A673 (cell line): ENCODE measurements at regions of chrX and their contacts with region 1.

Region 1: GRCh38 chrX:56729152-56729850 is at the start of gene NBDY:
- DNase-seq: peak; percentile 64
- H3K4me3 ChIP-seq: peak within 1 kb of the TSS; percentile 56
- H3K27ac ChIP-seq: peak within 1 kb of the TSS; percentile 69
- H3K4me1 ChIP-seq: peaks cover 4% of the 10 kb centered on the region
- H3K27me3 ChIP-seq: no peaks in the 10 kb centered on the region
- CTCF ChIP-seq: no peak
- total RNA-seq, gene NBDY: 46.8 and 53.1 TPM in 2 replicates

Region 2: DNA sequence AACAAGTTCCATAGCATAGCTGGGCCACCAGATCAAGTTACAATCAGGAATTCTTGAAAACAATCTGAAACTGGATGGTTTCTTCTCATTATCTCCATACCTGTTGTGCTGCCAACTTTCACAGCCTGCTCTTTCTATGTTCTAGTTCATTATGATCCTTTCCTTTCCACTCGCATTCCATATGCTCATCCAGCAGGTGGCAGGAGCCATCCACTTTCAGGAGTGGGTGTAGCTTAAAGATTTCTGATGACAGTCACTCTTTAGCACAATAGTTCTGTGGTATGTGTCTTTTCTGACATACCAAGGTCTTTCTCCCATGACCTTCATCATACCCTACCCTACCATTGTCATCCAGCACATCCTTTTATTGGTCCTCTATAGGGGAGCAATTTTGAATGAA is 1594.1 kb before region 1 on chrX:
- CTCF ChIA-PET with region 1: no interaction called
- POLR2A ChIA-PET with region 1: no interaction called
- intact Hi-C with region 1: loop called (anchors 5 kb)
- DNase-seq: peak; percentile 43
- H3K4me3 ChIP-seq: no peak overlapping the region
- H3K27ac ChIP-seq: no peak overlapping the region
- H3K4me1 ChIP-seq: no peaks in the 10 kb centered on the region
- H3K27me3 ChIP-seq: no peaks in the 10 kb centered on the region
- CTCF ChIP-seq: peak; percentile 61

Region 3: DNA sequence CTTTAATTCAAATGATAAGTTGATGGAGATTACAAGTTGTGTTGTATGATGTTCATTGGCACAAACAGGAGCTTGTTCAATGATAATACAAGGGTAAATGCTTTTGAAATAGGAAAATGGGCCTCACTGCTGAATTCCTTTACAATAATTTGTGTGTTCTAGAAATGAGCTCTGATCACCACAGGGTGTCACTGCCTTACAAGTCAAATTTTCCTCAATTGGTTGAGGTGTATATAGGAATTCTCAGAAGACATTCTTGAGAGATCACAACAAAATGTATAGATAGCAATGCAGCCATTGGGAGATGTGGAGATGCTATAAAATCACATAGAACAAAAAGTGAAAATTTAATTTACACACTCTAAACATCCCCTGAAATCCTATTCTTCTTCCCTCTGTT is 447.5 kb before region 1 on chrX:
- CTCF ChIA-PET with region 1: no interaction called
- POLR2A ChIA-PET with region 1: no interaction called
- intact Hi-C with region 1: loop called (anchors 5 kb)
- DNase-seq: peak; percentile 23
- H3K4me3 ChIP-seq: no peak overlapping the region
- H3K27ac ChIP-seq: no peak overlapping the region
- H3K4me1 ChIP-seq: no peaks in the 10 kb centered on the region
- H3K27me3 ChIP-seq: no peaks in the 10 kb centered on the region
- CTCF ChIP-seq: 0 out of 2 replicates have a peak, but pooled peaks have one; percentile 12

Region 4: GRCh38 chrX:56563231-56564161 is 165.8 kb before region 1 on chrX and contains the start of gene UBQLN2:
- CTCF ChIA-PET with region 1: no interaction called
- POLR2A ChIA-PET with region 1: no interaction called
- intact Hi-C with region 1: loop called (anchors 2 kb)
- DNase-seq: peak; percentile 84
- H3K4me3 ChIP-seq: peak within 1 kb of the TSS; percentile 60
- H3K27ac ChIP-seq: peak within 1 kb of the TSS; percentile 94
- H3K4me1 ChIP-seq: no peaks in the 10 kb centered on the region
- H3K27me3 ChIP-seq: no peaks in the 10 kb centered on the region
- CTCF ChIP-seq: peak; percentile 43
- total RNA-seq, gene UBQLN2: 27.2 and 28.8 TPM in 2 replicates